Left ventricle myocardium superior (tissue), 1 donor: ENCODE measurements at regions of chr1 and their contacts with region 1.

Region 1: GRCh38 chr1:179365320-179366092 is at the start of gene AXDND1:
- DNase-seq: peak; percentile 90
- ATAC-seq: peak; percentile 97
- total RNA-seq, gene AXDND1: not detected

Region 2: GRCh38 chr1:179293340-179294327 is 71.9 kb before region 1 on chr1 and contains the start of gene SOAT1:
- intact Hi-C with region 1: loop called (anchors 5 kb)
- DNase-seq: peak; percentile 98
- ATAC-seq: peak; percentile 100
- total RNA-seq, gene SOAT1: 9.7 TPM

Region 3: DNA sequence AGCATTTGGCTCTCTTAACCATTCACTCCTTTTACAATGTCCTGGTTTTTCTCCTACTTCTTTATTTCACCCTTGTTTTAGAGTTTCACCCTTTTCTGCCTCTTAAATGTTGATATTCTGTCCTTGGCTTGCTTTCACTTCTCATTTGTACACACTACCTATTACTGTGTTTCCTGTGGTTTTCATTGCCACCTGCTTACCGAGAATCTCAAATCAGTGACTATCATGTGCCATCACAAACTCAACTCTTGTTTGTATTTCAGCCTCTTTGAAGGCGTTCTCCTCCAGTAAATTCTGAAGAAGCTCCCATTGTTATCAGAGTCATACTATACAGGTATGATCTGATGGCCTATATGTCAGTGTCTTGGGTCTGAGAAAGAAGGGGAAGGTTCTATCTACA is 144.5 kb after region 1 on chr1:
- intact Hi-C with region 1: no loop called
- DNase-seq: no peak
- ATAC-seq: no peak